PC-3 (cell line): ENCODE measurements at regions of chr3 and their contacts with region 1.

Region 1: GRCh38 chr3:185887066-185887465 is 50.7 kb downstream of the TRA2B start:
- DNase-seq: no peak
- ATAC-seq: no peak
- H3K4me3 ChIP-seq: no peak overlapping the region
- H3K27ac ChIP-seq: no peak overlapping the region
- H3K4me1 ChIP-seq: no peaks in the 10 kb centered on the region
- H3K27me3 ChIP-seq: no peaks in the 10 kb centered on the region
- CTCF ChIP-seq: no peak

Region 2: GRCh38 chr3:185852635-185853034 is 34.4 kb before region 1 on chr3:
- CTCF ChIA-PET with region 1: no interaction called
- POLR2A ChIA-PET with region 1: no interaction called
- intact Hi-C with region 1: loop called (anchors 5 kb)
- DNase-seq: no peak
- ATAC-seq: no peak
- H3K4me3 ChIP-seq: no peak overlapping the region
- H3K27ac ChIP-seq: no peak overlapping the region
- H3K4me1 ChIP-seq: no peaks in the 10 kb centered on the region
- H3K27me3 ChIP-seq: no peaks in the 10 kb centered on the region
- CTCF ChIP-seq: no peak